Right ventricle myocardium inferior (tissue), 1 donor: ENCODE measurements at regions of chrX and their contacts with region 1.

Region 1: GRCh38 chrX:153953342-153953830 is 8.9 kb upstream of the RENBP start:
- DNase-seq: peak; percentile 82
- ATAC-seq: peak; percentile 69

Region 2: DNA sequence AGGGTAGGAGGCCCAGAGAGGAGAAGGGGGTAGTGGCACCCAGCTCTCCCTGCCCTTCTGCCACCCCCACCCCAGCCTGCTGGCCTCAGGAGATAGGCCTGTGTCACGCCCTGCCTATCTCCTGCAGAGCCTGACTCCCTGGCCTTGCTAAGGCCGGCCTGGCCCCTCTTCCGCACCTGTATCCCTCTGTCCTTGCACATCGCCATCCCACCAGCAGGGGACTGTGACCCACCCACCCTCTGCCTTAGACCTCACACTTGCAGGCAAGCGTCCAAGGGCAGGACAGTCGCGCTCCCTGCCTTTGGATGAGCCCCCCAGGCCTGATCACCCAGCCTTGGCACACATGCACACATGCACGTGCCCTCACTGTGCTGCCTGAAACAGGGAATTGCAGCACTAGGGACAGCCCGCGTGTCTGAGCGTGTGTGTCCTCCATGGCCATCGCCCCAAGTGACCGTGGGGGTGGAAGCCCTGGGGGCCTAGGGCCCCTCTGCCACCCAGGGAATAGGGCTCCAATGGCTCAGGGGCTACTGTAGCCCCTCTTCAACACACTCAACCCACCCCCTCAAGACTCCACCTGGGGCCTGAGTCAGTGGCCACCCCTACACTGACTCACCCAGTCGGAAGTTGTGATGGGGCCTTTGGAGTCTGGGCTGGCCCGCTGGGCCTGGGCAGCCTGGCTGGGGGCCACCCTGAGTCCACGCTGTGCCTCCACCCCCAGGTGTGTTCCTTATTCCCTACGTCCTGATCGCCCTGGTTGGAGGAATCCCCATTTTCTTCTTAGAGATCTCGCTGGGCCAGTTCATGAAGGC is 263.5 kb before region 1 on chrX:
- intact Hi-C with region 1: no loop called
- DNase-seq: no peak
- ATAC-seq: peak; percentile 5

Region 3: DNA sequence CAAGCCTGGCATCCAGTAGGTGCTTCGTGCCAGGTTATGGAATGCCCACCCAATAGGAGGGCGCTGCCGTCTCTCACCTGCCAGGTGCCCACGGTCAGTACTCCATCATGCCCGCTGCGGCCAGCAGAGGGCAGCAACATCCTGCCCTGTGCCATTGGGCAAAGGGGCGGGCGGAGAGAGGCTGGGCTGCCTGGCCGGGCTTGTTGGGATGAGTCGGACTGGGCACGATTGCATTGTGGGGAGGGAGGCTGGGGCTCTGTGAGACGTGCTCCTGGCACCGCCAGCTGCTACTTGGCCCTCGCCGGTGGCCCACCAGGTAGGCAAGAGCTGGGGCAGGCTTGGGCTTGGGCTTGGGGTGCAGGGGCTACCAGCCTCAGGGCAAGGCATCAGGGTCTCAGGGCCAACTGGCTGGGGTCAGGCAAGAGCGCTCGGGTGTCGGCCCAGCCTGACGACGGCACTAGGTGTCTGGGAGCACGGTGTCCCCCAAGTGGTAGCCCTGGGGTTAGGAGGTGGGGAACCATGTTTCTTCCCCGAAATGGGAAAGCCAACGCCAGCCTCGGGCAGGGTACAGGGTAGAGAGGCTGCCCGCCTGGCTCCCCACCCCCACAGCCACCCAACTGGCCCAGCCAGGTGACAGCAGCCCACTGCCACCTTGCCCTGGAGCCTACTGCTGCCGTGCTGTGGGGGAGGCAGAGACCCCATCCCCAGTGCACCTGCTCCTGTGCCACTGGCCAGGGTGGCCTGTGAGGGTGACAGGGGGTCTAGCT is 189.2 kb before region 1 on chrX and contains the start of gene PLXNB3:
- intact Hi-C with region 1: loop called (anchors 1 kb)
- DNase-seq: peak; percentile 89
- ATAC-seq: peak; percentile 84
- total RNA-seq, gene PLXNB3: 2.3 TPM

Region 4: GRCh38 chrX:153971450-153972367 is 18.3 kb after region 1 on chrX and contains the start of gene HCFC1:
- intact Hi-C with region 1: no loop called
- DNase-seq: peak; percentile 96
- ATAC-seq: peak; percentile 78
- total RNA-seq, gene HCFC1: 25.4 TPM